ENCODE measurements at regions of chr15 and their contacts with region 1.

Region 1: GRCh38 chr15:74373731-74374647 is 6.5 kb upstream of the CYP11A1 start:
- DNase-seq: peak; percentile 79 to 97
- H3K4me3 ChIP-seq: peak overlapping the region; percentile 37 to 74 (median 62)
- H3K27ac ChIP-seq: no peak overlapping the region
- H3K4me1 ChIP-seq: peaks cover 4 to 15% (median 9%) of the 10 kb centered on the region in 4 experiments
- H3K27me3 ChIP-seq: peaks cover 0 to 3% (median 0%) of the 10 kb centered on the region in 4 experiments; a peak in 3 of 7 replicates
- CTCF ChIP-seq: peak; percentile 85 to 93 (median 90)
- EP300 ChIP-seq: no peak
- POLR2A ChIP-seq: peak in 1 of 2 experiments; percentile 44; a peak in 1 of 3 replicates
- RAD21 ChIP-seq: peak; percentile 92 to 94

Region 2: GRCh38 chr15:74396445-74397238 is 22.7 kb after region 1 on chr15:
- CTCF ChIA-PET with region 1: interaction called, 24 read pairs
- POLR2A ChIA-PET with region 1: no interaction called
- DNase-seq: no peak
- H3K4me3 ChIP-seq: no peak overlapping the region
- H3K27ac ChIP-seq: no peak overlapping the region
- H3K4me1 ChIP-seq: peaks cover 0 to 12% (median 7%) of the 10 kb centered on the region in 4 experiments; a peak in 4 of 7 replicates
- H3K27me3 ChIP-seq: no peaks in the 10 kb centered on the region
- CTCF ChIP-seq: no peak
- EP300 ChIP-seq: no peak
- POLR2A ChIP-seq: no peak
- RAD21 ChIP-seq: no peak

Region 3: DNA sequence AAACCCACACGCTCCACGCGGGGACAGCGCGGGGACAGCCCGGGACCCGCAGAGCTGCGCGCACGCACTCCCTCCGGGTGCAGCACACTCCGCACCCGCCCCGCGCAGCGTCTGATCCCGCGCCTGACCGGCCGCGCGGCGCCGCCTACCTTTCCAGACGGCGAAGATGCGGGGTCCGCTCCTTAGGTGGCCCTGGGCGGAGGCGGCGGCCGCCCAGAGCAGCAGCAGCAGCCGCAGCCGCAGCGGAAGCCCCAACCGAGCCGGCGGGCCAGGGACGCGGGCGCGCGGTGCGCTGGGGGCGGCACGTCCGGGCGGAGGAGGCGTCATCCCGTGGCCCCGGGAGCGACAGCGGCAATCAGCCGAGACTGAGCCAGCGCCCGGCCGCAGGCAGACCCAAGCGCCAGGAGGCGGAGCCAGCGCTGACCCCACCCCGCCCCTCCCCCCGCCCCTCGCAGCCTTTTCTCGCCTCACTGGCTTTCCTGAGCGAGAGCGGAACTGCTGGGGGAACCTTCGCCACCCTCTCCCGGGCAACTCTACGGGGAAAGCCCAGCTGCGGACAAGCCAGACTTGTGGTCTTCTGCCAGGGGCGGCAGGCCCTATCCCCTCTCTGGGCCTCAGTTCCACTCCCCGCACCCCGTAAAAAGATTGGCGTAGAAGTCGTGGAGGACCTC is 59.7 kb after region 1 on chr15 and contains the start of gene SEMA7A:
- CTCF ChIA-PET with region 1: interaction called, 1,311 read pairs
- POLR2A ChIA-PET with region 1: no interaction called
- DNase-seq: peak; percentile 58 to 89
- H3K4me3 ChIP-seq: peak within 1 kb of the TSS; percentile 70 to 89 (median 76)
- H3K27ac ChIP-seq: no peak within 1 kb of the TSS; the same call in 1 of the 2 replicates
- H3K4me1 ChIP-seq: peaks cover 0 to 12% (median 7%) of the 10 kb centered on the region in 4 experiments; a peak in 6 of 7 replicates
- H3K27me3 ChIP-seq: peaks cover 0 to 14% (median 10%) of the 10 kb centered on the region in 4 experiments; a peak in 5 of 7 replicates
- CTCF ChIP-seq: no peak
- EP300 ChIP-seq: no peak
- POLR2A ChIP-seq: peak in 1 of 2 experiments; percentile 72; a peak in 2 of 3 replicates
- RAD21 ChIP-seq: no peak
- total RNA-seq, gene SEMA7A: 14.6 and 15.0 TPM in 2 replicates

Region 4: GRCh38 chr15:74489518-74490338 is 115.7 kb after region 1 on chr15:
- CTCF ChIA-PET with region 1: interaction called, 63 read pairs
- POLR2A ChIA-PET with region 1: interaction called, 4 read pairs
- DNase-seq: peak; percentile 41 to 86
- H3K4me3 ChIP-seq: peak overlapping the region in 1 of 4 experiments; percentile 26; a peak in 1 of 8 replicates
- H3K27ac ChIP-seq: no peak overlapping the region
- H3K4me1 ChIP-seq: peaks cover 0 to 4% (median 4%) of the 10 kb centered on the region in 4 experiments; a peak in 5 of 7 replicates
- H3K27me3 ChIP-seq: no peaks in the 10 kb centered on the region
- CTCF ChIP-seq: peak; percentile 72 to 87 (median 76)
- EP300 ChIP-seq: no peak
- POLR2A ChIP-seq: peak in 1 of 2 experiments; percentile 39; a peak in 1 of 3 replicates
- RAD21 ChIP-seq: peak; percentile 68 to 72